ENCODE measurements at regions of chr7 and their contacts with region 1.

Region 1: GRCh38 chr7:80941208-80941758 is 22.4 kb upstream of the SEMA3C start:
- DNase-seq: no peak
- ATAC-seq: peak in 2 of 4 donors; percentile 52 to 72
- H3K4me3 ChIP-seq: no peak overlapping the region
- H3K27ac ChIP-seq: peak overlapping the region in 7 of 12 donors; percentile 27 to 66 (median 37)
- H3K4me1 ChIP-seq: peaks cover 0 to 32% (median 15%) of the 10 kb centered on the region in 12 donors
- H3K27me3 ChIP-seq: no peaks in the 10 kb centered on the region
- CTCF ChIP-seq: no peak
- POLR2A ChIP-seq: no peak

Region 2: DNA sequence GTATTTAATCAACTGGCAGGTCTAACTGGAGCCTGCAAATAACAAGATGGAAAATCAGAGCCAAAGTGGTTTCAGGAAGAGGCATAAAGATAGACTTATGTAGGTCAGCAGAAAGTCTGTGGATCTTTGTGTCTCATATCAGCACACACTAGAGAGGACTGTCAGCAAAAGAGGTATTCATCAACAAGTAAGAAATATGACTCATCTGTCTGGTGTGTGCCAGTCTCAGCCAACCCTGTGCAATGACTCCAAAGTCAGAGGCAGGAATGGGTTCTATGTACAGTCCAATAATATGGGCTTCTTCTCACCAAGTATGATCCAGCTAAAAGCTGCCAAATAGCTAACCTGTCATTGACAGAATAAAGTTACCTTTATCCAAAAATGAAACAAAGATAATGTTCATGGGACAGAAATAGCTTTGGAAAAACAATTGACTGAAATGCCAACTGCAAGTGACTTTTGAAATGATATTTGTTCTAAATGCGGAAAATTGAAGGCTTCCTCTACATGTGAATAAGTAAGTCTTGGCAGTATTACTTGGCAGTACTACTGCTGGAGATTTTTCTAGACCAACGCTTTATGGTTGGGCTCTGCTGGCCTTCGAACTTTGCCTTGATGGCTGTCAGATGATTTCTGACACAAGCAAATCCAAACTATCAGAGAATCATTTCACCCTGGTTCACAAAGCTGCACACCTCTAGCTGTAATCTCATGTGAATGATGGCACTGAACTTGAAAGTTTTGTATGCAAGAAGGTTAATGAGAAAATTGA is 249.9 kb after region 1 on chr7:
- intact Hi-C with region 1: loop called in 1 of 10 experiments (anchors 10 kb)
- DNase-seq: peak in 2 of 5 donors; percentile 29 to 31
- ATAC-seq: peak; percentile 88 to 97 (median 93)
- H3K4me3 ChIP-seq: no peak overlapping the region
- H3K27ac ChIP-seq: peak overlapping the region in 8 of 12 donors; percentile 4 to 57 (median 30)
- H3K4me1 ChIP-seq: peaks cover 0 to 19% (median 3%) of the 10 kb centered on the region in 12 donors
- H3K27me3 ChIP-seq: no peaks in the 10 kb centered on the region
- CTCF ChIP-seq: no peak
- POLR2A ChIP-seq: no peak